Prostate gland (tissue), 2 donors: ENCODE measurements at regions of chr11 and their contacts with region 1.

Region 1: GRCh38 chr11:65817835-65818742 is 15.7 kb upstream of the SNX32 start:
- DNase-seq: peak; percentile 91
- H3K4me3 ChIP-seq: peak overlapping the region; percentile 51 to 56
- H3K27ac ChIP-seq: peak overlapping the region; percentile 52 to 76
- H3K4me1 ChIP-seq: no peaks in the 10 kb centered on the region
- H3K27me3 ChIP-seq: no peaks in the 10 kb centered on the region
- CTCF ChIP-seq: peak; percentile 99 to 100 (median 100)
- POLR2A ChIP-seq: peak; percentile 18

Region 2: DNA sequence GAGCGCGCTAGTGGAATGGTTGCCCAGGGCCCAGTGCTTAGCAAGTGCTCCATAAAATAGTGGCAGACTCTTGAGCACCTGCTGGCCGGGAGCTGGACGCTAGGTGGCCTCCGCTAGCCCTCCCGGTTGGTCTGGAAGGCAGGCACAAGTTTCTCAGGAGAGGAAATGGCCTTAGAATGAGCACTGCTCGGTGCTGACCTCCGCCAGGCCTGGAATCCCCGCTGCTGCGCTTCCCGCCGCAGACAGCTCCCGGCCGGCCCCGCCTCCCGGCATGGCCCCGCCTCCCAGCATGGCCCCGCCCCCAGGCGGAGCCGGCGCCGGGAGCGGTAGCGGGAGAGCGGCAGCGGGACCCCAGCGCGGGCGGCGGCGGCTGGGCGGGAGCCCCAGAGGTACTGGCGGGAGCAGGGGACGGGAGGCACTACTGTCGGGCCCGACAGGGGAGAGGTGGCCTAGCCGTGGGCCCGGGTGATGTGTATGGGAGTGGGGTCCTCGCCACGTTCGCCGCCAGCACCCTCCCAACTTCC is 180.2 kb before region 1 on chr11 and contains the start of gene SIPA1:
- intact Hi-C with region 1: loop called (anchors 5 kb)
- DNase-seq: peak; percentile 52
- H3K4me3 ChIP-seq: peak within 1 kb of the TSS; percentile 43 to 56
- H3K27ac ChIP-seq: peak within 1 kb of the TSS; percentile 74 to 80
- H3K4me1 ChIP-seq: no peaks in the 10 kb centered on the region
- H3K27me3 ChIP-seq: no peaks in the 10 kb centered on the region
- CTCF ChIP-seq: peak in 2 of 4 experiments; percentile 40 to 46
- POLR2A ChIP-seq: peak; percentile 69
- total RNA-seq, gene SIPA1: 38.2 to 45.2 TPM

Region 3: GRCh38 chr11:65779851-65780577 is 38.1 kb before region 1 on chr11:
- intact Hi-C with region 1: loop called (anchors 2 kb)
- DNase-seq: peak; percentile 71
- H3K4me3 ChIP-seq: peak overlapping the region; percentile 84 to 88
- H3K27ac ChIP-seq: peak overlapping the region; percentile 72 to 80
- H3K4me1 ChIP-seq: peaks cover 13% of the 10 kb centered on the region
- H3K27me3 ChIP-seq: no peaks in the 10 kb centered on the region
- CTCF ChIP-seq: peak; percentile 92 to 100 (median 96)
- POLR2A ChIP-seq: peak; percentile 63